ENCODE measurements at regions of chr9 and their contacts with region 1.

Region 1: DNA sequence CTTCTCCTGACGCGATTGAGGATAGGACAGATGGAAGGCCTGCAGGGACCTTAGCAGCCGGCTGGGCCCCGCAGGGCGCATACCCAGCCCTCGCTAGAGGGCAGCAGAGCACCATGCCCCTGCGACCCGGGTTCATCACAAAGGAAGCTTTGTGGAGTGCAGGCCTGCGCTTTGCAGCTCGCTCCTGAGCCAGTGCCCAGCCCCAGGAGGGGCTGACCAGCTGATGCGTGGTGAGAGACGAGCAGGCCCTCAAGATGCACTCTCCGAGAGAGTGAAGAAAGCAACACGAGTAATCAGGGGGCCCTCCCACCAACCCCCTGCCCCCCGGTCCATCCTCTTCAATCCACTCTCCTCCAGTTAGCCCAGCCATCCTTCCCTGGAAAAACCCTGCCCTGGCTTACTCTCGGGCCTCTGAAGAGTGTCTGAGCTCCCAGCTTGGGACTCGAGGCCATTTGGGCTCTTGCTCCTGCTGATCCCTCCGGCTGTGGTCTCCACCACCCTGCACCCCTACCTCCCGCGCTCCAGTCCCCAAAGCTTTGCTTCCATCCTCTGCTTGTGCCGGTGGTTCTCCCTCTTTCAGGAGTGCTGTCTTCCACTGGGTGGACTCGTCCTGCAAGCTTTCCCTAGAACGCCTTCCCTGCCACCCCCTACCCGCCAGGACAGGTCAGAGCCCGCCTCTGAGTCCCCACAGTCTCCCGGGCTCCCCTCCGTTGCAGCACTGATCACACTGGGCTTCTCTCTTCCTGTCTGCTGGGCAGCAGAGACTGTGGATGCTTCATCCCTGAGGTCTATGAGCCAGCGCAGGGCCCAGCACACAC is 9.1 kb upstream of the KIF12 start:
- DNase-seq: peak; percentile 82
- ATAC-seq: peak; percentile 95 to 97

Region 2: DNA sequence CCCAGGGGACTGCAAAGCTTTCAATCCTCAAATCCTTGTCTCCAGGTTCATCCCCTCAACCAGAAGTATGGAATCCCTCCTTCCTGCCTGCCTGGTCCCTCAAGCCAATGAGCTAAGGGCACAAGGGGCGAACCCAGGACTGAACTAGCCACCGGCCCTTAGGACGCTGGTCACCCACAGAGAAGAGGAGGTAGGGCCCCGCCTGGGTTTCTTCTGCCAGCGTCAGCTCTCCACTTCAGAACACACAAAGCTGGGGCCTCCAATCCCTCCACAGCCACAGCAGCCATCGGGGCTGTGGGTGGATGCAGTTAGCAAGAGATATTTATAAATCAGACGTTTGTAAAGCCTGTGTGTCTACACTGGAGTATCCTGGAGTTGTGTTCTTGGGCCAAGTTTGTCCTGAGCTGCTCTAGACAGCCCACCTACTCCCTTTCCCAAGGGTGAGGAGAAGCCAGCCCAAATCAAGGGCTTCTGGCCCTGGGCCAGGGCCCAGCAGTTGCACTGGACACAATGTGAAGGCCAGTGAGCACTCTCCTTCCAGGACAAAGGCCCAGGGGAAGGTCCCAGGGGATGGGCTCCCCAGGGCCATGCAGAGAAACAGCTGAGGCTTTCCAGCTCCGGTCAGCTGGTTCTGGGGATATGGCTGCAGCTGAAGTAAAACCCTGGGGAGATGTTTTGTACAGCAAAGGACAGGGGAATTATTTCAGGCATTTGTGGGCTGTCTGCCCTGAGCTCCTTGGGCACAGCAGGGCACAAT is 49.0 kb before region 1 on chr9:
- intact Hi-C with region 1: no loop called
- DNase-seq: no peak
- ATAC-seq: peak; percentile 49 to 83

Region 3: DNA sequence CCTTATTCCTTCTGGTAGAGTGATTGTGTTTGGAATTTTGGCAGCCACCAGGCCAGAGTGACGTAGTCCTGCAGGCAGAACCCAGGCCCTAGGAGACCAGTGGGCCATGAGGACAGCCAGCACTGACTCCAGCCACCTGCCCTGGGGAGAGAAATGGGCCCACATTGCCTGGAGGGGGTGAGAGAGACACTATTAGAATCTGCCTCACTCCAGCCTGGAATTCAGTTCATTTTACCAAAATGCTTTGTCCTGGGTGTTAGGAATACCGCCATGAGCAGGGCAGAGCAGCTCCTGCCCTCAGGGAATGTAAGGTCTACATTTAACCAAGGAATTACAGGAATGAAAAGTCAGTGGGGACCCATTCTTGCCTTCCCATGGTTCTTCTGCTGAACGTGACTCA is 41.6 kb after region 1 on chr9:
- intact Hi-C with region 1: loop called (anchors 2 to 5 kb)
- DNase-seq: no peak
- ATAC-seq: peak; percentile 16 to 18

Region 4: GRCh38 chr9:114155263-114155972 is 47.2 kb after region 1 on chr9 and contains the start of gene COL27A1:
- intact Hi-C with region 1: loop called in 1 of 2 experiments (anchors 5 kb)
- DNase-seq: peak; percentile 85
- ATAC-seq: peak; percentile 87 to 88
- total RNA-seq, gene COL27A1: 7.0 to 9.2 TPM

Region 5: GRCh38 chr9:114271641-114272081 is 163.4 kb after region 1 on chr9:
- intact Hi-C with region 1: loop called (anchors 5 kb)
- DNase-seq: peak; percentile 61
- ATAC-seq: peak; percentile 53 to 70

Region 6: DNA sequence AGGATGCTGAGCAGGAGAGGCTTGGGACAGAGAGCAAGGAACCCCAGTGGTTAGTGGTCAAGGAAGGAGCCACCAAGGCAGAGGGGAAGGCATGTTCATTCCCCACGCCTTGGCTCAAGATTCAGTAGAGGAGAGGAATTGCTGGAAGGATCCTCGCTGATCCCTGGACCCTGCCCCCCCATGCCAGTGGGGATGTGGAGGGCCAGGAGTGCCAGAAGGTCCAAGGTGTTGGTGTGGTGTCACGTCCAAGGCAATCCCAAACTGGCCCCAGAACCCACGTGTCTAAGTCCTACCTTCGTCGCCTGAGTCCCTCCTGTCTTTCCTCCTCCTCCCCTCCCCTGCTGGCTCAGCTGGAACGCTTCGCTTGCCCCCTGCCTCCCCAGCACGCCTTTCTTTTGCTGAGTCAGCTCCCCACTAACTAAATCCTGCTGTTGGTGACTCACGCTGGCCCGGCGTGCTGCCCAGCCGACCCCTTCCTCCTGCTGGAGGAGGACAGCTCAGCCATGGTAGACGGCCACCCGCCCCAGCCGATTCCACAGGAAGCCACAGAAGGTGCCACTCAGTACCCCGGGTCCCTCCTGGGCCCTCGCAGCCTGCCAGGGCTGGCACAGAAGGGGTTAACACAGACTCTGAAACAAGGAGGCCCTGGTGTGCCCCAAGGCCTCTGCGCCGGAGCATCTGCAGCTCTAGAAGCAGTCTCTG is 177.1 kb after region 1 on chr9:
- intact Hi-C with region 1: loop called in 1 of 2 experiments (anchors 5 kb)
- DNase-seq: peak; percentile 27
- ATAC-seq: peak in 1 of 2 donors; percentile 8

Measured in left cardiac atrium (tissue), 4 donors.